CD4-positive, alpha-beta memory T cell (primary cell): ENCODE measurements at regions of chr11 and their contacts with region 1.

Region 1: DNA sequence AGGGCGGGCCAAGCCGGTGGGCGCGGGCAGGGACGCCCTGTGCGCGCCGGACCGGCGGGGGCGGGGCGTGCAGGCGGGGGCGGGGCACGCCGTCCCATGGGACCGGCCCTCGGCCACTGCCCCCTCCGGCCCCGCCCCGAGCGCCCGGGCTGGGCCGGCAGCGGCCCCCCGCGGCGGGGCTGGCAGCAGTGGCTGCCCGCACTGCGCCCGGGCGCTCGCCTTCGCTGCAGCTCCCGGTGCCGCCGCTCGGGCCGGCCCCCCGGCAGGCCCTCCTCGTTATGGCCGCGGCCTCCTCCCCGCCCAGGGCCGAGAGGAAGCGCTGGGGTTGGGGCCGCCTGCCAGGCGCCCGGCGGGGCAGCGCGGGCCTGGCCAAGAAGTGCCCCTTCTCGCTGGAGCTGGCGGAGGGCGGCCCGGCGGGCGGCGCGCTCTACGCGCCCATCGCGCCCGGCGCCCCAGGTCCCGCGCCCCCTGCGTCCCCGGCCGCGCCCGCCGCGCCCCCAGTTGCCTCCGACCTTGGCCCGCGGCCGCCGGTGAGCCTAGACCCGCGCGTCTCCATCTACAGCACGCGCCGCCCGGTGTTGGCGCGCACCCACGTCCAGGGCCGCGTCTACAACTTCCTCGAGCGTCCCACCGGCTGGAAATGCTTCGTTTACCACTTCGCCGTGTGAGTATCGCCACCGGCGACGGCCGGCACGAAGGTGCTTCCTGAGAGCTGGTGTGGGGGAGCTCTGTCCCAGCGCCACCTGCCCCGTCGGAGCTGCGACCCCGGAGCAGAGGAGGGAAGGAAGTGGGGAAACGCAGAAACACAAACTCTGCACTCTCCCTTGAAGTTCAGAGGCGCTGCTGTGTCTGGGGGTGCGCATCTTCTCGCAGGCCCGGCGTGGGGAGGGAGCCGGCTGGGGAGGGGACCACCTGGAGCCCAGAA is at the start of gene KCNQ1:
- DNase-seq: peak in 4 of 5 donors; percentile 32 to 38 (median 35)
- H3K4me3 ChIP-seq: peak within 1 kb of the TSS; percentile 6 to 68
- H3K4me3 Mint-ChIP-seq: peak within 1 kb of the TSS; percentile 92 to 97 (median 94)
- H3K27ac ChIP-seq: peak within 1 kb of the TSS; percentile 15
- H3K27ac Mint-ChIP-seq: peak within 1 kb of the TSS; percentile 72 to 85 (median 84)
- H3K4me1 ChIP-seq: peaks cover 57% of the 10 kb centered on the region
- H3K4me1 Mint-ChIP-seq: peaks cover 28 to 57% (median 41%) of the 10 kb centered on the region in 4 donors
- H3K27me3 ChIP-seq: no peaks in the 10 kb centered on the region
- H3K27me3 Mint-ChIP-seq: no peaks in the 10 kb centered on the region
- total RNA-seq, gene KCNQ1: 21.4 to 21.6 TPM

Region 2: DNA sequence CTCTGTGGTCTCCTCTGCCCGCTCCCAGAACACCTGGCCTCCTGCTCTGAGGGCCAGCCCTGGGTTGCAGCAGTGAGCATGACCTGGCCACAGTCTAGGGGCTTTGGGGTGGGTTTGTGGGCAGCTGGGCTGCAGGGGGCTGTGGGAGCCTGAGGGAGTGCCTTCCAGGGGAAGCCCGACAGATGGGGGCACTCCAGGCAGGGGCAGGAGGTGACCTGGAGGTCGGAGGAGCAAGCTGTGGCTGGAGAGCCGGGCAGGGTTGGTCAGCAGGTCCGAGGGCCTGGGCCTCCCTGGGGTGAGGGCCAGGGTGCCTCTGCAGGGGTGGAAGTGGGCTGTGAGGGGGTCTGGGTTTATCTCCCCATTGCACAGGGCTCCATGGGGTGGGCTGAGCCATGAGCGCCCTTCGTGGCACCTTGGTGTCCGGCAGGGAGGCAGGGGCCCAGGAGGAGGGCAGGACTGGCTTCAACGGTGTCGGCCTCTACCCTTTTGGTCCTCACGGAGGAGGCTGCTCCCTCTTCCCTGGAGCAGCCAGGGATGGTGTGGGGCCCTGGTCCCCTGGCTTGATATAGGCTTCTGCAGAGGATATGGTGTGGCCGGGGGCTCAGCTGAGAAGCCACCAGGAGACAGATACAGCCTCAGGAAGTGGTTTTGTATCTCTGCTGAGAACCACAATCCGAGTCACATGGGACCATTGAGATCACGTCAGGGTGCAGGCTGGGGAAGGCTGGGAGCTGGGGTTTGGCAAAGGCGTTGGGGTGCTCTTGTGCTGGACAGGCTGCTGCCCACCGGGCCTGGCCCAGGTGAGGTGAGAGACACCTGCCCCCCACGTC is 22.0 kb after region 1 on chr11:
- CTCF ChIA-PET with region 1: no interaction called
- POLR2A ChIA-PET with region 1: interaction called, 35 read pairs
- intact Hi-C with region 1: loop called (anchors 1 kb)
- DNase-seq: peak; percentile 66 to 75 (median 72)
- H3K4me3 ChIP-seq: peak overlapping the region in 1 of 2 donors; percentile 48
- H3K4me3 Mint-ChIP-seq: peak overlapping the region; percentile 70 to 91 (median 74)
- H3K27ac ChIP-seq: no peak overlapping the region
- H3K27ac Mint-ChIP-seq: peak overlapping the region in 5 of 7 donors; percentile 25 to 66 (median 38)
- H3K4me1 ChIP-seq: peaks cover 39% of the 10 kb centered on the region
- H3K4me1 Mint-ChIP-seq: peaks cover 24 to 76% (median 54%) of the 10 kb centered on the region in 4 donors
- H3K27me3 ChIP-seq: no peaks in the 10 kb centered on the region
- H3K27me3 Mint-ChIP-seq: no peaks in the 10 kb centered on the region

Region 3: DNA sequence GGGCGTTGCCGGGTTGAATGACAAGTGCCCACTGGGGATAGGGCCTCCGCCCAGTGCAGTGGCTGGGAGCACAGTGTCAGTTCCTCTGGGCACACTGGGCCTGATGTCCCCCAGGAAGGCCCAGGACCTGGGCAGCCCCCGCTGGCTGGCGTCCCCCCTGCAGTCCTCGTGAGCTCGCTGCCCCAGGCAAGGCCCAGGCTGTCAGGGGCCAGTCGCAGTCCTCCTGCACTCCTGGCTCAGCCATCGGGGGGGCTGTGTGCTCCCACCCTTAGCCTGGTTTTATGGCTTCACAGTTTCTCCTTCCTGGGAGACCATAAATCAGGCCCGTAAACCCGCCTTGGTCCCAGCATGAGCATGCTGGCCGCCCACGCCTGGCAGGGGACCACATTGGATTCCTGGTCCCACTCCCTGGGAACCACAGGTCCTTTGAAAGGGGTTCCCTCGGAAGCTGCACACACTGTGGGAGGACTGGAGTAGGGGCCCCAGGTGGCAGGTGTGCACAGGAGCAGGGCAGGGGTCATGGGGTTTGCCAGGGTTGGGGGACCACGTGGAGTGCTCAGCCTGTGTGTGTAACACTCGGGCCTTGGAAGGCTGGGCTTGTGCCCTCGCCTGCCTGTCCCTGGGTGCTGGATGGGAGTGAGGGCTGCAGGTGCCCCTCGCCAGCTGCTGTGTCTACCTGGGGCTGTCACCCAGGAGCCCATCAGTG is 141.2 kb after region 1 on chr11:
- CTCF ChIA-PET with region 1: no interaction called
- POLR2A ChIA-PET with region 1: no interaction called
- intact Hi-C with region 1: no loop called
- DNase-seq: no peak
- H3K4me3 ChIP-seq: no peak overlapping the region
- H3K4me3 Mint-ChIP-seq: no peak overlapping the region
- H3K27ac ChIP-seq: no peak overlapping the region
- H3K27ac Mint-ChIP-seq: no peak overlapping the region
- H3K4me1 ChIP-seq: no peaks in the 10 kb centered on the region
- H3K4me1 Mint-ChIP-seq: no peaks in the 10 kb centered on the region
- H3K27me3 ChIP-seq: no peaks in the 10 kb centered on the region
- H3K27me3 Mint-ChIP-seq: no peaks in the 10 kb centered on the region